ENCODE measurements at regions of chr17 and their contacts with region 1.

Region 1: DNA sequence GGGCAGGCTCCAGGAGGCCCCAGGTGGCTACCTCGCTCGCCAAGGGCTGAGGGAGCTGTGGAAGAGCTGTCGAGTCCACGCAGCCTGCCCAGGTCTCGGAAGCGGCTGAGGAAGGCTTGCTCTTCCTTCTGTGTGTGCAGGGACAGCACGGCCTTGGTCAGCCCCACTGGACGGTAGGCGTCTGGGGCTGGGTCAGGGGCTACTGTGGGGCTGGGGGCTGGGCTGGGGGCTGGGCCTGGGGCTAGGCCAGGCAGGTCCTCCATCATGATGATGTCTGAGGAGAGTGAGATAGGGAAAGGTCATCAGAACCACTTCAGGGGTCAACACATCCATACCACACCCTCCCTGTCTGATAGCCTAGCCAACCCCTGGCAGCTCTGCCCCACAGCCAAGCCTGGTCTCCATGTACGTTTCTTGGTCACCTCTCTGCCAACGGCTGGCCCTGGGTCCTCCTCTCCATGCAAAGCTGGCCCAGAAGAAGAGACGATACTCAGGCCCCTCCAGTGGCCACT is 7.4 kb downstream of the PER1 start:
- DNase-seq: no peak
- ATAC-seq: no peak
- H3K4me3 ChIP-seq: no peak overlapping the region
- H3K27ac ChIP-seq: no peak overlapping the region
- H3K4me1 ChIP-seq: 0 out of 2 replicates have a peak, but pooled peaks cover under 1% of the 10 kb centered on the region
- H3K27me3 ChIP-seq: no peaks in the 10 kb centered on the region
- CTCF ChIP-seq: no peak
- EP300 ChIP-seq: no peak
- POLR2A ChIP-seq: no peak
- RAD21 ChIP-seq: no peak

Region 2: DNA sequence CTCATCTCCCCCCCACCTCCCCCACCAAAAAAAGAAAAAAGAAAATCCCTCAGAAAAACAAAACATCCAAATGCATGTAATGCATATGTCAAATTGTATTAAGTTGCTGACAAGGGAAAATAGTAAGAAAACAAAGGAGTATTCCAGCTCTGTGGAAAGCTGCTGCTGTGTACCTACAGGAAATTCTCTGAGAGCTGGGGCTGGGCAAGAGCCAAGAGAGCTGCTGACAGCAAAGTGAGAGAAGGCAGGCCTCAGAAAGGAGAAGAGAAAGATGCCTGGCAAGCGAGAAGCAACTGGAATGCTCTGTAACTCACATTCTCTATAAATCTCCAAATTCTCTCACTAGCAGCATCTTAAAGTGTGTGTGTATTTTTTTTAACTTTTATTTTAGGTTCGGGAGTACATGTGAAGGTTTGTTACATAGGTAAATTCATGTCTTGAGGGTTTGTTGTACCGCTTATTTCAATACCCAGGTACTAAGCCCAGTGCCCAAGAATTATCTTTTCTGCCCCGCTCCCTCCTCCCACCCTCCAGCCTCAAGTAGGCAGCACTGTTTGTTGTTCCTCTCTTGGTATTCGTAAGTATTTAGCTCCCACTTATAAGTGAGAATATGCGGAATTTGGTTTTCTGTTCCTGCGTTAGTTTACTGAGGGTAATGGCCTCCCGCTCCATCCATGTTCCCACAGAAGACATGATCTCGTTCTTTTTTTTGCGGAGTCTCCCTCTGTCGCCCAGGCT is 188.4 kb before region 1 on chr17:
- CTCF ChIA-PET with region 1: no interaction called
- POLR2A ChIA-PET with region 1: no interaction called
- in situ Hi-C with region 1: no loop called
- intact Hi-C with region 1: no loop called
- DNase-seq: no peak
- ATAC-seq: no peak
- H3K4me3 ChIP-seq: no peak overlapping the region
- H3K27ac ChIP-seq: no peak overlapping the region
- H3K4me1 ChIP-seq: no peaks in the 10 kb centered on the region
- H3K27me3 ChIP-seq: 0 out of 5 replicates have a peak, but pooled peaks cover 0 to 4% of the 10 kb centered on the region in 2 experiments
- CTCF ChIP-seq: no peak
- EP300 ChIP-seq: no peak
- POLR2A ChIP-seq: no peak
- RAD21 ChIP-seq: no peak

Region 3: DNA sequence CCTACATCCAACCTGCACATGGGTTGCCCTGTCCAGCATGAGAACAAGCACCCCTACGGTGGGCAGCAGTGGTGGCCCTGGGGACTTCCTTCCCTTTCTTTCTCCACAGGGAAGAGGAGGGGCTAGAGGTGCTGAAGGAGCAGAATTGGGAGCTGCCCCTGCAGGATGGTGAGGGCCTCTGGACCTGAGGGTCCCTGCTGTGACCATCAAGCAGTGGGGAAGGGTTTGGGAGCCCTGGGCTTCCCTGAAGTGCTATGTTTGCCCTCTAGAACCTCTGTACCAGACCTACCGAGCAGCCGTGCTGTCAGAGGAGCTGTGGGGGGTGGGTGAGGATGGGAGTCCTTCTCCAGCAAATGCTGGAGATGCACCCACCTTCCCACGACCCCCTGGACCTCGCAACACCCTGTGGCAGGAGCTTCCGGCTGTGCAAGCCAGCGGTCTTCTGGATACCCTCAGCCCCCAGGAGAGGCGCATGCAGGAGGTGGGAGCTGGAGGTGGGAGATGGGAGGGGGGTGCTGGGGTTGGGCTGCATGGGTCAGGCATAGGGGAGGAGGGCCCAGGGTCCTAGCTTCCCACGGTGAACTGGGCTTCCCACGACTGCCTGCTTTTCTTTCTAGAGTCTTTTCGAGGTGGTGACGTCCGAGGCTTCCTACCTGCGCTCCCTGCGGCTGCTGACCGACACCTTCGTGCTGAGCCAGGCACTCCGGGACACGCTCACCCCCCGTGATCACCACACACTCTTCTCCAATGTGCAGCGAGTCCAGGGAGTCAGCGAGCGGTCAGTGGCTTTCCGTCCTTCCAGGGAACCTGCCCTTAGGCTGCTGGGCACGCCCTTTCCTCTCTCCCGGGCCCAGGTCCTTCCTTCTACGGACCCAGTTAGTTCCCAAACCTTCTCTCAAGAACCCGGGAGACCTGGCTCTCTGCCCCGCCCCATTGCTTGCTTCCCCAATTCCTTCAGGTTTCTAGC is 170.3 kb after region 1 on chr17:
- CTCF ChIA-PET with region 1: no interaction called
- POLR2A ChIA-PET with region 1: no interaction called
- in situ Hi-C with region 1: no loop called
- intact Hi-C with region 1: no loop called
- DNase-seq: no peak
- ATAC-seq: no peak; the same call in 2 of the 3 replicates
- H3K4me3 ChIP-seq: no peak overlapping the region; a peak in 1 of 6 replicates
- H3K27ac ChIP-seq: no peak overlapping the region
- H3K4me1 ChIP-seq: no peaks in the 10 kb centered on the region
- H3K27me3 ChIP-seq: peaks cover 15 to 79% of the 10 kb centered on the region in 2 experiments
- CTCF ChIP-seq: no peak
- EP300 ChIP-seq: no peak
- POLR2A ChIP-seq: no peak
- RAD21 ChIP-seq: no peak

Region 4: DNA sequence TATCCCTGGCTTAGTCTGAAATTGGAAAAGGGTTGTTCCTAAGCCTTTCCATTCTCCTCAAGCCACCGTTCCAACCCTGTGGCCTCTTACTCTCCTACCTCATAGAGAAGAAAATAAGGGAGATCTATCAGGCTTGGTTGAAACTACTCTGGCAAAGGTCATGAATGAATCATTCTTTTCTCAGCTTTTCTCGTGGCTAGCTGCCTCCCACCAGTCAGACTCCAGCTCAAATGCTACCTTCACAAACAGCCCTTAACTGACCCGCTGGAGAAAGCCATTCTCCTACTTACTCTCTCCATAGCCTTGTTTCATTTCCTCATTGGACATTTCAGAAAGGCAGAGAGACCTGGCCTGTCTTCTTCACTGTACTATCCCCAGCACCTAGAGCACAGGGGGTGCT is 476.8 kb after region 1 on chr17:
- CTCF ChIA-PET with region 1: no interaction called
- POLR2A ChIA-PET with region 1: no interaction called
- in situ Hi-C with region 1: no loop called
- intact Hi-C with region 1: loop called (anchors 5 kb)
- DNase-seq: no peak
- ATAC-seq: no peak
- H3K4me3 ChIP-seq: no peak overlapping the region
- H3K27ac ChIP-seq: peak overlapping the region; percentile 8
- H3K4me1 ChIP-seq: peaks cover 11% of the 10 kb centered on the region; the same call in 1 of the 2 replicates
- H3K27me3 ChIP-seq: no peaks in the 10 kb centered on the region
- CTCF ChIP-seq: no peak
- EP300 ChIP-seq: no peak
- POLR2A ChIP-seq: no peak
- RAD21 ChIP-seq: no peak